ENCODE measurements at regions of chr4 and their contacts with region 1.

Region 1: GRCh38 chr4:41120297-41121217 is 93.8 kb downstream of the APBB2 start:
- DNase-seq: no peak
- ATAC-seq: no peak
- H3K4me3 ChIP-seq: no peak overlapping the region
- H3K27ac ChIP-seq: no peak overlapping the region
- H3K4me1 ChIP-seq: peaks cover 12% of the 10 kb centered on the region
- H3K27me3 ChIP-seq: no peaks in the 10 kb centered on the region
- CTCF ChIP-seq: no peak
- EP300 ChIP-seq: no peak
- POLR2A ChIP-seq: no peak
- RAD21 ChIP-seq: no peak

Region 2: GRCh38 chr4:40976343-40976742 is 144.2 kb before region 1 on chr4:
- CTCF ChIA-PET with region 1: no interaction called
- POLR2A ChIA-PET with region 1: no interaction called
- in situ Hi-C with region 1: no loop called
- intact Hi-C with region 1: loop called (anchors 10 kb)
- DNase-seq: peak; percentile 57
- ATAC-seq: peak; percentile 66
- H3K4me3 ChIP-seq: no peak overlapping the region
- H3K27ac ChIP-seq: no peak overlapping the region
- H3K4me1 ChIP-seq: no peaks in the 10 kb centered on the region
- H3K27me3 ChIP-seq: no peaks in the 10 kb centered on the region
- CTCF ChIP-seq: peak; percentile 63
- EP300 ChIP-seq: no peak
- POLR2A ChIP-seq: no peak
- RAD21 ChIP-seq: no peak

Region 3: DNA sequence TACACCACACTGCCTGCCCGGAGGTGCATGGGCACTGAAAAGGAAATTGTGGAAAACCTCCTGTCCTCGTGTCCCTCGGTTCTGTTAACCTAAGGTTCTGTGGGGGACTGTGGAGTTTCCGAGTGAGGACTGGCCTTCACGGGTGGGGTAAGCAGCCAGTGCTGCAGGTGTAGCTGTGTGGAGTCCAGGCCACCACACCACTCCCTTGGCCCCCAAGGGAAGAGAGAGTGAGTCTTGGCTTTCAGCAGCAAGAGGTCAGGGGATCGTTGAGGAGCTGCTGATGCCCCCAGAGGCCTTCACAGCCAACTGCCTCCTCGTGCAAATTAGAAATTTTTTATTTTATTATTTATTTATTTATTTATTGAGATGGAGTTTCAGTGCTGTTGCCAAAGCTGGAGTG is 1011.5 kb after region 1 on chr4:
- CTCF ChIA-PET with region 1: no interaction called
- POLR2A ChIA-PET with region 1: no interaction called
- in situ Hi-C with region 1: no loop called
- intact Hi-C with region 1: no loop called
- DNase-seq: no peak
- ATAC-seq: no peak
- H3K4me3 ChIP-seq: no peak overlapping the region
- H3K27ac ChIP-seq: no peak overlapping the region
- H3K4me1 ChIP-seq: no peaks in the 10 kb centered on the region
- H3K27me3 ChIP-seq: peaks cover 0 to 8% of the 10 kb centered on the region in 2 experiments; a peak in 1 of 5 replicates
- CTCF ChIP-seq: no peak
- EP300 ChIP-seq: no peak
- POLR2A ChIP-seq: no peak
- RAD21 ChIP-seq: no peak